ENCODE measurements at regions of chrX and their contacts with region 1.

Region 1: DNA sequence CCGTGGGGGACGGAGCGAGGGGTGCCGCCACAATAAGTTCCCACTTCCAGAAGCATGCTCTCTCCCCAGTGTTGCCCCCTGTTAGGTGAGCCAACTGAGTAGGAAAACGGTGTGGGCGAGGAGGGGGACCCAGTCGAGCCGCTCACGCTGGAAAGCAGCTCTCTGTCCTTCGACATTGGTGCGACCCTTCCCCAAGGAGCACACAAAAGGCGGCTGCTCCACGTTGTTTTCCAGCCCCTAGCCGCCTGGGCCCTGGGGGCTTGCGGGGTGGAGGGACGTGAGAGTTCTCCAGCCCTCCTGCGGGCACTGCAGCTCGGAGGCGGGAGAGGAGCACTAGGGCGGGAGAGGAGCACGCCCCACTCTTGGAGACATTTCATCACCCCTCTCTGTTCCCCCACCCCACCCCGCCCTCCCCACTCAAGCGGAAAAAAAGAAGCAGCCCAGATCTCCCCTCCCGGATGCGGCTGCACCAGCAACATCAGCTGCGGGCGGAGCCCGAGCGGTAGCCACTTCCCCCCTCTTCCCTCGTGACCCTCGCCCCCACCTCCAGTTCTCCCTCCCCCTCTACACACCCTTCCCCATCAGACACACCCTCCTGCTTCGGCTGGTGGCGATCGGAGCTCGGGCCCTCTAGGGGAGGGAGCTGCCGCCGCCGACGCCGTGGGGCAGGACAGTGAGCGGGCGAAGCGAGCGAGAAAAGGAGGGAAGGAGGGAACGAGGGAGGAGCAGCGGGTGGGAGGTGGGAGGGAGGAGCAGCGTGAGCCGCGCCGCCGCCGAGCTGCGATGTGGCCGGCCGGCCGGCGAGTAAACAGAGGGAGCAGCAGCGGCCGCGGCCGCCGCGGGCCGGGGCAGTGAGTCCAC is at the start of gene DOCK11:
- DNase-seq: peak; percentile 51 to 92 (median 78)
- ATAC-seq: peak; percentile 69
- H3K4me3 ChIP-seq: peak within 1 kb of the TSS; percentile 86
- H3K4me3 Mint-ChIP-seq: peak within 1 kb of the TSS; percentile 99
- H3K27ac ChIP-seq: peak within 1 kb of the TSS; percentile 85 to 90
- H3K27ac Mint-ChIP-seq: peak within 1 kb of the TSS; percentile 99
- H3K4me1 ChIP-seq: peaks cover 31% of the 10 kb centered on the region
- H3K4me1 Mint-ChIP-seq: peaks cover 35% of the 10 kb centered on the region
- H3K27me3 ChIP-seq: no peaks in the 10 kb centered on the region
- H3K27me3 Mint-ChIP-seq: no peaks in the 10 kb centered on the region
- CTCF ChIP-seq: no peak
- total RNA-seq, gene DOCK11: 68.2 to 70.3 TPM

Region 2: GRCh38 chrX:118520216-118521206 is 25.2 kb after region 1 on chrX:
- CTCF ChIA-PET with region 1: interaction called, 4 read pairs
- POLR2A ChIA-PET with region 1: interaction called, 38 read pairs
- intact Hi-C with region 1: loop called in 1 of 2 experiments (anchors 2 kb)
- DNase-seq: no peak
- ATAC-seq: no peak
- H3K4me3 ChIP-seq: no peak overlapping the region
- H3K4me3 Mint-ChIP-seq: peak overlapping the region; percentile 31
- H3K27ac ChIP-seq: peak overlapping the region; percentile 38 to 44
- H3K27ac Mint-ChIP-seq: peak overlapping the region; percentile 98
- H3K4me1 ChIP-seq: peaks cover 53% of the 10 kb centered on the region
- H3K4me1 Mint-ChIP-seq: peaks cover 71% of the 10 kb centered on the region
- H3K27me3 ChIP-seq: no peaks in the 10 kb centered on the region
- H3K27me3 Mint-ChIP-seq: no peaks in the 10 kb centered on the region
- CTCF ChIP-seq: no peak

Region 3: GRCh38 chrX:118528071-118528737 is 32.9 kb after region 1 on chrX:
- CTCF ChIA-PET with region 1: interaction called, 4 read pairs
- POLR2A ChIA-PET with region 1: interaction called, 117 read pairs
- intact Hi-C with region 1: loop called (anchors 2 to 5 kb)
- DNase-seq: peak; percentile 9 to 82 (median 40)
- ATAC-seq: peak; percentile 64
- H3K4me3 ChIP-seq: peak overlapping the region; percentile 57
- H3K4me3 Mint-ChIP-seq: peak overlapping the region; percentile 91
- H3K27ac ChIP-seq: peak overlapping the region; percentile 77 to 79
- H3K27ac Mint-ChIP-seq: peak overlapping the region; percentile 98
- H3K4me1 ChIP-seq: peaks cover 65% of the 10 kb centered on the region
- H3K4me1 Mint-ChIP-seq: peaks cover 82% of the 10 kb centered on the region
- H3K27me3 ChIP-seq: no peaks in the 10 kb centered on the region
- H3K27me3 Mint-ChIP-seq: no peaks in the 10 kb centered on the region
- CTCF ChIP-seq: no peak

Region 4: GRCh38 chrX:118536687-118537461 is 41.6 kb after region 1 on chrX:
- CTCF ChIA-PET with region 1: interaction called, 3 read pairs
- POLR2A ChIA-PET with region 1: interaction called, 117 read pairs
- intact Hi-C with region 1: loop called (anchors 2 to 5 kb)
- DNase-seq: peak; percentile 19 to 76 (median 38)
- ATAC-seq: peak; percentile 85
- H3K4me3 ChIP-seq: peak overlapping the region; percentile 3
- H3K4me3 Mint-ChIP-seq: peak overlapping the region; percentile 60
- H3K27ac ChIP-seq: peak overlapping the region; percentile 40 to 59
- H3K27ac Mint-ChIP-seq: peak overlapping the region; percentile 86
- H3K4me1 ChIP-seq: peaks cover 34% of the 10 kb centered on the region
- H3K4me1 Mint-ChIP-seq: peaks cover 73% of the 10 kb centered on the region
- H3K27me3 ChIP-seq: no peaks in the 10 kb centered on the region
- H3K27me3 Mint-ChIP-seq: no peaks in the 10 kb centered on the region
- CTCF ChIP-seq: peak; percentile 61

Region 5: DNA sequence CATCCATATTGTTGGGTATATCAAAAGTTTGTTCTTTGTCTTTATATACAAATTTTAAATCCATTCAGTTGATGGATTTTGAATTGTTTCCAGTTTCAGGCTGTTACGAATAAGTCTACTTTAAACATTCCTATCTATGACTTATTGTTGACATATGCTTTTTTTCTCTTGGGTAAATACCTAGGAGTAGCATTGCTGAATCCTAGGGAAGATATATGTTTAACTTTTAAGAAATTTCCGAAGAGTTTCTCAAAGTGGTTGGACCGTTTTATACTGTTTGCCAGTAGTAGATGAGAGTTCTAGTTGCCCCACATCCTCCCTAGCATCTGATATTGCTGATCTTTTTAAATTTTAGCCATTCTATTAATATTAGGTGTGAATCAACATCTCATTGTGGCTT is 171.3 kb after region 1 on chrX:
- CTCF ChIA-PET with region 1: no interaction called
- POLR2A ChIA-PET with region 1: no interaction called
- intact Hi-C with region 1: no loop called
- DNase-seq: no peak
- ATAC-seq: no peak
- H3K4me3 ChIP-seq: no peak overlapping the region
- H3K4me3 Mint-ChIP-seq: no peak overlapping the region
- H3K27ac ChIP-seq: no peak overlapping the region
- H3K27ac Mint-ChIP-seq: peak overlapping the region; percentile 36
- H3K4me1 ChIP-seq: no peaks in the 10 kb centered on the region
- H3K4me1 Mint-ChIP-seq: no peaks in the 10 kb centered on the region
- H3K27me3 ChIP-seq: no peaks in the 10 kb centered on the region
- H3K27me3 Mint-ChIP-seq: no peaks in the 10 kb centered on the region
- CTCF ChIP-seq: no peak

Region 6: GRCh38 chrX:119130911-119131310 is 635.6 kb after region 1 on chrX:
- CTCF ChIA-PET with region 1: no interaction called
- POLR2A ChIA-PET with region 1: no interaction called
- intact Hi-C with region 1: no loop called
- DNase-seq: no peak
- ATAC-seq: no peak
- H3K4me3 ChIP-seq: no peak overlapping the region
- H3K4me3 Mint-ChIP-seq: no peak overlapping the region
- H3K27ac ChIP-seq: no peak overlapping the region
- H3K27ac Mint-ChIP-seq: no peak overlapping the region
- H3K4me1 ChIP-seq: no peaks in the 10 kb centered on the region
- H3K4me1 Mint-ChIP-seq: no peaks in the 10 kb centered on the region
- H3K27me3 ChIP-seq: no peaks in the 10 kb centered on the region
- H3K27me3 Mint-ChIP-seq: peaks cover 5% of the 10 kb centered on the region
- CTCF ChIP-seq: no peak